Common myeloid progenitor, CD34-positive (primary cell): ENCODE measurements at regions of chr9 and their contacts with region 1.

Region 1: GRCh38 chr9:127423934-127424675 is at the start of gene ZNF79:
- DNase-seq: peak; percentile 90 to 97 (median 97)
- H3K4me3 ChIP-seq: peak within 1 kb of the TSS; percentile 71 to 99 (median 92)
- H3K27ac ChIP-seq: peak within 1 kb of the TSS; percentile 80 to 89
- H3K4me1 ChIP-seq: peaks cover 5 to 32% (median 22%) of the 10 kb centered on the region in 4 experiments
- H3K27me3 ChIP-seq: no peaks in the 10 kb centered on the region

Region 2: DNA sequence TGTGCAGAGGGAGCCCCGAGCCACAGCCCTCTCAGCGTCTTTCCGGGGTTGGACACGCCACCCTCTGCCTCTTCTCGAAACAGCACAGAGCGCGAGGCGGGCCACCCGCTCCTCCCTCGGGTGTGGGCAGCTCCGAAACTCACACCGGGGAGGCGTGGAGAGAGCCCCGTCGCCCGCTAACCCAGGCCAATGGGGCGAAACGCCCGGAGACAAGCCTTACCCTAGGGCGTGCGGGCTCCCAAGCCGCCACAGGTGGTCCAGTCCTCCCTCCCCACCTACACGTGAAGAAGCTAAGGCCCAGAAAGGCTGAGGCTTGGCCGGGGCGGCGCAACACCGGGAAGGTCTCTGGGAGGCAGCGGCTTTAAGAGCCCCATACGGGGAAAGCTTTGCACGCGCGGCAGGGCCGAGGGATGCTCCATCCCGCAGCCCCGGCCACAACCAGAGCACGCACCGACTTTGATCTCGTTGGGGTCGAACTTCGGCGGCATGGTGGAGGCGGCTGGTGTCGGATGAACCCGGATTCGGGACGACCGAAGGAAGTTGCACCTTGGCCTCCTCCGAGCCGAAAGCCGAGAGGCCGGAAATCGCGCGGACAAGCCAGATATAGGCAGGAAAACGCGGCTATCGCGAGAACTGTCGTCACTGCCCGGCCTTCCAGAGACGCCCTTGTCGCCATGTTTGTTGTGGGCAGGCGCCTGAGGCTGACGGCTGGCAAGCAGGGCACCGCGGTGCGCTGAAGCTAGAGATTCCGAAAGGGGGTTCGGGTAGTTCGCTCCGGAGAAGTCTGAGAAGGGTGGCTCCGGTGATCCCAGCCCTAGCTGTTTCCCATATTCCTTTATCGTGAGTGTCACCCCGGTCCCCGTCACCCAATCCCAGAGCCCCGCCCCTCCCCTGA is 27.0 kb after region 1 on chr9 and contains the starts of genes LRSAM1 and RPL12:
- CTCF ChIA-PET with region 1: interaction called, 3 read pairs
- POLR2A ChIA-PET with region 1: interaction called, 14 read pairs
- DNase-seq: peak; percentile 95 to 98 (median 96)
- H3K4me3 ChIP-seq: peak within 1 kb of the TSS; percentile 85 to 99 (median 92)
- H3K27ac ChIP-seq: peak within 1 kb of the TSS; percentile 84 to 92
- H3K4me1 ChIP-seq: peaks cover 13 to 57% (median 41%) of the 10 kb centered on the region in 4 experiments
- H3K27me3 ChIP-seq: no peaks in the 10 kb centered on the region